HEK293 (cell line): ENCODE measurements at regions of chr3 and their contacts with region 1.

Region 1: GRCh38 chr3:67685499-67685898 is 31.1 kb upstream of the SUCLG2 start:
- H3K4me3 ChIP-seq: no peak overlapping the region
- H3K27ac ChIP-seq: no peak overlapping the region
- H3K4me1 ChIP-seq: no peaks in the 10 kb centered on the region
- CTCF ChIP-seq: no peak

Region 2: DNA sequence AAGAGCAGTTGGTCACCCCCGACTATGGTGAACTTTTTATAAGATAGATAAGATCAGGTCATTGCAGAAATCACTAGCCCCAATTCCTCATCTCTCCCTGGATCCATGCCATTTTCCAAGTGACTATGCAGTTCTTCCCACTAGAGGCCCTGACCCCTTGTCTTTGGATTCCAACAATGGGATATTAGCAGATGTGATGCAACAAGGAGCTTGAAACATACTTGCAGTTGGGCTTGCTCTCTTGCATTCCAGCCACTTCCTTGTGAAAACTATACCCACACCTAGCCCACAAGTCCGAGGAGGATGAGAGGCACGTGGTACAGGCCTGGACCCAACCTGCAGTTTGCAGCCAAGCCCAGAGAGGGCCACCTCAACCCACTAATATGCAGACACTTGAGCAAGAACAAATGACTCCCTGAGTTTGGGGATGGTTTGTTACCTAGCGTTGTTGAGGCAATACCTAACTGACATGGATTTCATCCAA is 91.7 kb before region 1 on chr3:
- CTCF ChIA-PET with region 1: interaction called, 10 read pairs
- POLR2A ChIA-PET with region 1: no interaction called
- H3K4me3 ChIP-seq: no peak overlapping the region
- H3K27ac ChIP-seq: no peak overlapping the region
- H3K4me1 ChIP-seq: no peaks in the 10 kb centered on the region
- CTCF ChIP-seq: no peak

Region 3: DNA sequence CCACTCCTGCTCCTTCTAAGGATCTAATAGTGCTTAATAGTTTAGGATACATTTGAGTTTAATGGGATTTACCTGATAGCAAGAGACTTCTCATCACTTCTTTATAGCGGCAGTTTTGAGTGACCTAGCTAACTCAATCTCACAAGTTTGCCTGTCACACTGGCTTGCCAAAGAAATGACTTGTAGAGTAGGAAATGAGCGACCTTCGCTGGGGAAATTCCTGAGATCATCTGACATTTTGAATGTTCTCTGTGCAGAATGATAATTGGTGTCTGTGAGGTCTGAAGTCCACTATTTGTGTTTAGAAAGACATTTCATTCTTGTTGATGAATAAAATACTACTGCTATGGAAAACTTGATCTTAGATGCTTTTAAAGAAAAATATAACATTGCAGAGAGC is 61.4 kb before region 1 on chr3:
- CTCF ChIA-PET with region 1: no interaction called
- POLR2A ChIA-PET with region 1: no interaction called
- H3K4me3 ChIP-seq: no peak overlapping the region
- H3K27ac ChIP-seq: no peak overlapping the region
- H3K4me1 ChIP-seq: no peaks in the 10 kb centered on the region
- CTCF ChIP-seq: no peak

Region 4: DNA sequence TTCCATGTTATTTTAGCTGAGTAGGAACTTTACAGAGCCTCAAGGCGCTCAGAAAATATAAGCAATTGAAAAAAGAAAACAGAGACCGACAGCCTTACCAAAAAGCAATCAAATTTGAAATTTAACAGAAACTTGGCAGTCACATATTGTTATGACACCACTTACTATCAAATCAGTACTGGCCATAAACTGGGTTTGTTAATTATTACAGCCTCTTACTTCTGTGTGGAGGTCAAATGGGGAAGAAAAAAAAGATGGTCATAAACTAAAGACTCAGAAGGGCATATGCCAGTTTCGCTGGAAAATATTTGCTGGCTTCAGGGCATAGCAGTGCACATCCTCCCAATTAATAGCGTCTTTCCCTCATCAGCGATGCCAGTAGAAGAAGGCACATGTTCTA is 14.4 kb after region 1 on chr3:
- CTCF ChIA-PET with region 1: no interaction called
- POLR2A ChIA-PET with region 1: no interaction called
- H3K4me3 ChIP-seq: no peak overlapping the region
- H3K27ac ChIP-seq: no peak overlapping the region
- H3K4me1 ChIP-seq: no peaks in the 10 kb centered on the region
- CTCF ChIP-seq: no peak